ENCODE measurements at regions of chr19 and their contacts with region 1.

Region 1: GRCh38 chr19:41334793-41335192 is 18.9 kb downstream of the TGFB1 start:
- DNase-seq: no peak
- ATAC-seq: no peak
- H3K4me3 Mint-ChIP-seq: no peak overlapping the region
- H3K27ac Mint-ChIP-seq: peak overlapping the region; percentile 51
- H3K4me1 Mint-ChIP-seq: peaks cover 36% of the 10 kb centered on the region
- H3K27me3 Mint-ChIP-seq: no peaks in the 10 kb centered on the region

Region 2: GRCh38 chr19:41353466-41354342 is 18.9 kb after region 1 on chr19 and contains the start of gene TGFB1:
- POLR2A ChIA-PET with region 1: interaction called, 54 read pairs
- DNase-seq: peak; percentile 96
- ATAC-seq: peak; percentile 46
- H3K4me3 Mint-ChIP-seq: peak within 1 kb of the TSS; percentile 97
- H3K27ac Mint-ChIP-seq: peak within 1 kb of the TSS; percentile 97
- H3K4me1 Mint-ChIP-seq: peaks cover 59% of the 10 kb centered on the region
- H3K27me3 Mint-ChIP-seq: no peaks in the 10 kb centered on the region
- total RNA-seq, gene TGFB1: 172 to 179 TPM

Region 3: DNA sequence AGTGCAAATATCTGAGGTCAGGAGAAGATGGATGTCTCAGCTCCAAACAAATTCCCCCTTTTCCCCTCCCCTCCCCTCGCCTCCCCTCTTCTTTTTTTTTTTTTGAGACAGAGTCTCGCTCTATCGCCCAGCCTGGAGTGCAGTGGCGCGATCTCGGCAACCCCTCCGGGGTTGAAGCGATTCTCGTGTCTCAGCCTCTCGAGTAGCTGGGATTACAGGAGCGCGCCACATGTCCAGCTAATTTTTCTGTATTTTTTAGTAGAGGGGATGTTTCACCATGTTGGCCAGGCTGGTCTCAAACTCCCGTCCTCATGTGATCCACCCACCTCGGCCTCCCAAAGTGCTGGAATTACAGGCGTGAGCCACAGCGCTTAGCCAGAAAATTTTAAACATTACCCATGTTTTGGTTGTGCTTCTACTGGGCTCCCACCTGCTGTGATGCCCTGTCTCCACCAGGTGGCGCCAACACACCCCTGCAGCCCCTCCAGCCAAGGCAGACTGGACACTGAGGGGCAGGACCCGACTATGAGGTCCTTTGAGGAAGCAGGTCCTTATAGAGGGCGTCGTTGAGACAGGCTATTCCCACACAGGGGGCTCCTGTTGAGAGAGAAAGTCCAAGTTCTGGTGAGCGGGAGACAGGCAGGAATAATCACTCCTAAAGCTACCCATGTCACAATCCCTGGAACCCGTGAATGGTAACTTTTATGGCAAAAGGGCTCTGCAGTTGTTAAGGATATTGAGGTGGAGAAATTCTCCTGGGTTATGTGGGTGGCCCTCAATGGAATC is 114.5 kb after region 1 on chr19:
- POLR2A ChIA-PET with region 1: no interaction called
- DNase-seq: peak; percentile 82
- ATAC-seq: peak; percentile 79
- H3K4me3 Mint-ChIP-seq: peak overlapping the region; percentile 80
- H3K27ac Mint-ChIP-seq: no peak overlapping the region
- H3K4me1 Mint-ChIP-seq: peaks cover 10% of the 10 kb centered on the region
- H3K27me3 Mint-ChIP-seq: peaks cover 14% of the 10 kb centered on the region

Measured in activated naive CD8-positive, alpha-beta T cell treated with anti-CD3 and anti-CD28 coated beads, Interleukin-2, amount 10 ng/mL, durations not matched to agents 7 days and 5 days (primary cell).